Activated B cell treated with CpG ODN at 0.5 μM for 24 hours (primary cell): ENCODE measurements at regions of chr20 and their contacts with region 1.

Region 1: DNA sequence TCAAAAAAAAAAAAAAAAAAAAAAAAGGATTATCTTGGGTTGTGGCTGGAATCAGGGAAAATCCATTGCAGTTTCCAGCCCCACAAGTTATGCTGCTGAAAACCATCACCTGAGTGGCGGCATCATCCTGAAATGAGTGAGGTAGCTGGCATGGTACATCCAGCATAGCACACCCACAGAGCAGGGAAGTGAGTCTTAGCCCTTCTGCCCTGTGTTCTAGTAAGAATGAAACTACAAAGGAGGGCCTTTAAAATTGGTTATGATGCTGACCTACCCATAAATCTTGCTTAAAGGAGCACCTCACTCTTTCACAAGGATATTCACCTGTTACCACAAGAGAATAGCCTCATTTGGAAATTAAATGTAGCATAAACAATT is 119.2 kb downstream of the NFATC2 start:
- DNase-seq: no peak
- ATAC-seq: peak; percentile 70
- H3K4me3 Mint-ChIP-seq: peak overlapping the region; percentile 4
- H3K27ac Mint-ChIP-seq: peak overlapping the region; percentile 82
- H3K4me1 Mint-ChIP-seq: peaks cover 65% of the 10 kb centered on the region
- H3K27me3 Mint-ChIP-seq: no peaks in the 10 kb centered on the region
- CTCF ChIP-seq: no peak

Region 2: GRCh38 chr20:50848341-50848808 is 574.9 kb before region 1 on chr20:
- CTCF ChIA-PET with region 1: no interaction called
- POLR2A ChIA-PET with region 1: no interaction called
- intact Hi-C with region 1: no loop called
- DNase-seq: no peak
- ATAC-seq: no peak
- H3K4me3 Mint-ChIP-seq: peak overlapping the region; percentile 2
- H3K27ac Mint-ChIP-seq: peak overlapping the region; percentile 81
- H3K4me1 Mint-ChIP-seq: peaks cover 47% of the 10 kb centered on the region
- H3K27me3 Mint-ChIP-seq: no peaks in the 10 kb centered on the region
- CTCF ChIP-seq: no peak

Region 3: GRCh38 chr20:51335329-51335841 is 87.9 kb before region 1 on chr20:
- CTCF ChIA-PET with region 1: no interaction called
- POLR2A ChIA-PET with region 1: no interaction called
- intact Hi-C with region 1: no loop called
- DNase-seq: no peak
- ATAC-seq: no peak
- H3K4me3 Mint-ChIP-seq: no peak overlapping the region
- H3K27ac Mint-ChIP-seq: no peak overlapping the region
- H3K4me1 Mint-ChIP-seq: no peaks in the 10 kb centered on the region
- H3K27me3 Mint-ChIP-seq: no peaks in the 10 kb centered on the region
- CTCF ChIP-seq: no peak

Region 4: GRCh38 chr20:51385646-51386530 is 37.4 kb before region 1 on chr20:
- CTCF ChIA-PET with region 1: interaction called, 12 read pairs
- POLR2A ChIA-PET with region 1: interaction called, 5 read pairs
- intact Hi-C with region 1: loop called (anchors 2 kb)
- DNase-seq: no peak
- ATAC-seq: peak; percentile 65
- H3K4me3 Mint-ChIP-seq: no peak overlapping the region
- H3K27ac Mint-ChIP-seq: peak overlapping the region; percentile 62
- H3K4me1 Mint-ChIP-seq: peaks cover 42% of the 10 kb centered on the region
- H3K27me3 Mint-ChIP-seq: no peaks in the 10 kb centered on the region
- CTCF ChIP-seq: no peak

Region 5: GRCh38 chr20:51412991-51413481 is 10.2 kb before region 1 on chr20:
- CTCF ChIA-PET with region 1: interaction called, 5 read pairs
- POLR2A ChIA-PET with region 1: interaction called, 8 read pairs
- intact Hi-C with region 1: loop called (anchors 1 kb)
- DNase-seq: no peak
- ATAC-seq: no peak
- H3K4me3 Mint-ChIP-seq: no peak overlapping the region
- H3K27ac Mint-ChIP-seq: peak overlapping the region; percentile 61
- H3K4me1 Mint-ChIP-seq: peaks cover 78% of the 10 kb centered on the region
- H3K27me3 Mint-ChIP-seq: no peaks in the 10 kb centered on the region
- CTCF ChIP-seq: no peak

Region 6: GRCh38 chr20:51440589-51440988 is 17.3 kb after region 1 on chr20:
- CTCF ChIA-PET with region 1: no interaction called
- POLR2A ChIA-PET with region 1: interaction called, 3 read pairs
- intact Hi-C with region 1: loop called (anchors 2 kb)
- DNase-seq: no peak
- ATAC-seq: peak; percentile 54
- H3K4me3 Mint-ChIP-seq: peak overlapping the region; percentile 41
- H3K27ac Mint-ChIP-seq: peak overlapping the region; percentile 46
- H3K4me1 Mint-ChIP-seq: peaks cover 39% of the 10 kb centered on the region
- H3K27me3 Mint-ChIP-seq: no peaks in the 10 kb centered on the region
- CTCF ChIP-seq: no peak